CD4-positive, alpha-beta memory T cell (primary cell): ENCODE measurements at regions of chr1 and their contacts with region 1.

Region 1: DNA sequence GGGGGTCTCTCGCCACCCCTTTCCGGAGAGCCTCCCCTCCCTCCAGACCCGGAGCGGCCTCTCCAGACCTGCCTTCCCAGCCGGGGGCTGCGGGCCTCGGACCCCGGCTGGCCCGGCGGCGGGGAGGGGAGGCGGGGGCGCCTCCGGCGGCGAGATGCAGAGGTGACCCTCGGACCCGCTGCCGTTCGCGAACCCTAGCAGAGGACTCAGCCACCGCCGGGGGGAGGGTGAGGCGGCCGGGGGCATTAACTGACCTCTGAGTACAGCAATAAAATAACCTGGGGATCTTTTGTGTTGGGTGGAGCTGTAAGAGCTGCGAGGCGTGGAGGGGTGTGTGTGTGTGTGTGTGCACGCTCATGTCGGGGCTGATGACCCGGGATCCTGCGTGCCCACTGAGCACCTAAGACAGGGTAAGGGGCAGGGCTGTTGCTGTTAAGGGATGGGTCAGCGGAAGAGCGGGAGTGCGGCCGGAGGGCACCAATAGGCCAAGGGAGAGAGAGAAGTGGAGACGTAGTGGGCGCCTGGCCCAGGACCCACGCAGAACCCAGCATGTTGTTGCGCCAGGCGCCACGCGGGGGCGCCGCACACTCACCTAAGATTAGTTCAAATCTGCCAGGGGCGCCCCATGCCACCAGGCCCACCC is 6.3 kb downstream of the HAPLN2 start:
- DNase-seq: peak in 4 of 5 donors; percentile 58 to 68 (median 62)
- H3K4me3 ChIP-seq: peak overlapping the region in 1 of 2 donors; percentile 47
- H3K4me3 Mint-ChIP-seq: peak overlapping the region; percentile 69 to 88 (median 80)
- H3K27ac ChIP-seq: no peak overlapping the region
- H3K27ac Mint-ChIP-seq: peak overlapping the region in 2 of 7 donors; percentile 49 to 93
- H3K4me1 ChIP-seq: peaks cover 20% of the 10 kb centered on the region
- H3K4me1 Mint-ChIP-seq: peaks cover 6 to 16% (median 9%) of the 10 kb centered on the region in 4 donors
- H3K27me3 ChIP-seq: peaks cover 26% of the 10 kb centered on the region
- H3K27me3 Mint-ChIP-seq: peaks cover 31 to 38% of the 10 kb centered on the region in 2 donors

Region 2: GRCh38 chr1:156643778-156644092 is 18.2 kb after region 1 on chr1:
- CTCF ChIA-PET with region 1: interaction called, 23 read pairs
- POLR2A ChIA-PET with region 1: no interaction called
- intact Hi-C with region 1: no loop called
- DNase-seq: peak in 3 of 5 donors; percentile 30 to 58 (median 49)
- H3K4me3 ChIP-seq: no peak overlapping the region
- H3K4me3 Mint-ChIP-seq: peak overlapping the region in 4 of 8 donors; percentile 3 to 42 (median 15)
- H3K27ac ChIP-seq: no peak overlapping the region
- H3K27ac Mint-ChIP-seq: peak overlapping the region in 2 of 7 donors; percentile 15 to 65
- H3K4me1 ChIP-seq: peaks cover 32% of the 10 kb centered on the region
- H3K4me1 Mint-ChIP-seq: peaks cover 12 to 35% (median 22%) of the 10 kb centered on the region in 4 donors
- H3K27me3 ChIP-seq: peaks cover 52% of the 10 kb centered on the region
- H3K27me3 Mint-ChIP-seq: peaks cover 66 to 74% of the 10 kb centered on the region in 2 donors

Region 3: DNA sequence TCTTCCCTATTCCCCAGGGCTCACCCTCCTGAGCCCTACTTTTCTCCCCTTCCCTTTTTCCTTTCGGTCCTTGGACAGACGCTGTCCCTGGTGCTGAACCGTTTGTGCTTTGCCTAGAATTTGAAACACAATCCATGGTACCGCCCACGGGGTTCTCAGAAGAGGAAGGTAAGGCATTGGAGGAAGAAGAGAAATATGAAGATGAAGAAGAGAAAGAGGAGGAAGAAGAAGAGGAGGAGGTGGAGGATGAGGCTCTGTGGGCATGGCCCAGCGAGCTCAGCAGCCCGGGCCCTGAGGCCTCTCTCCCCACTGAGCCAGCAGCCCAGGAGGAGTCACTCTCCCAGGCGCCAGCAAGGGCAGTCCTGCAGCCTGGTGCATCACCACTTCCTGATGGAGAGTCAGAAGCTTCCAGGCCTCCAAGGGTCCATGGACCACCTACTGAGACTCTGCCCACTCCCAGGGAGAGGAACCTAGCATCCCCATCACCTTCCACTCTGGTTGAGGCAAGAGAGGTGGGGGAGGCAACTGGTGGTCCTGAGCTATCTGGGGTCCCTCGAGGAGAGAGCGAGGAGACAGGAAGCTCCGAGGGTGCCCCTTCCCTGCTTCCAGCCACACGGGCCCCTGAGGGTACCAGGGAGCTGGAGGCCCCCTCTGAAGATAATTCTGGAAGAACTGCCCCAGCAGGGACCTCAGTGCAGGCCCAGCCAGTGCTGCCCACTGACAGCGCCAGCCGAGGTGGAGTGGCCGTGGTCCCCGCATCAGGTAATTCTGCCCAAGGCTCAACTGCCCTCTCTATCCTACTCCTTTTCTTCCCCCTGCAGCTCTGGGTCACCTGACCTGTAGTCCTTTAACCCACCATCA is 26.8 kb after region 1 on chr1:
- CTCF ChIA-PET with region 1: interaction called, 153 read pairs
- POLR2A ChIA-PET with region 1: no interaction called
- intact Hi-C with region 1: loop called (anchors 1 kb)
- DNase-seq: no peak
- H3K4me3 ChIP-seq: no peak overlapping the region
- H3K4me3 Mint-ChIP-seq: no peak overlapping the region
- H3K27ac ChIP-seq: no peak overlapping the region
- H3K27ac Mint-ChIP-seq: no peak overlapping the region
- H3K4me1 ChIP-seq: peaks cover 11% of the 10 kb centered on the region
- H3K4me1 Mint-ChIP-seq: peaks cover 4 to 25% (median 12%) of the 10 kb centered on the region in 4 donors
- H3K27me3 ChIP-seq: peaks cover 19% of the 10 kb centered on the region
- H3K27me3 Mint-ChIP-seq: peaks cover 55 to 66% of the 10 kb centered on the region in 2 donors

Region 4: DNA sequence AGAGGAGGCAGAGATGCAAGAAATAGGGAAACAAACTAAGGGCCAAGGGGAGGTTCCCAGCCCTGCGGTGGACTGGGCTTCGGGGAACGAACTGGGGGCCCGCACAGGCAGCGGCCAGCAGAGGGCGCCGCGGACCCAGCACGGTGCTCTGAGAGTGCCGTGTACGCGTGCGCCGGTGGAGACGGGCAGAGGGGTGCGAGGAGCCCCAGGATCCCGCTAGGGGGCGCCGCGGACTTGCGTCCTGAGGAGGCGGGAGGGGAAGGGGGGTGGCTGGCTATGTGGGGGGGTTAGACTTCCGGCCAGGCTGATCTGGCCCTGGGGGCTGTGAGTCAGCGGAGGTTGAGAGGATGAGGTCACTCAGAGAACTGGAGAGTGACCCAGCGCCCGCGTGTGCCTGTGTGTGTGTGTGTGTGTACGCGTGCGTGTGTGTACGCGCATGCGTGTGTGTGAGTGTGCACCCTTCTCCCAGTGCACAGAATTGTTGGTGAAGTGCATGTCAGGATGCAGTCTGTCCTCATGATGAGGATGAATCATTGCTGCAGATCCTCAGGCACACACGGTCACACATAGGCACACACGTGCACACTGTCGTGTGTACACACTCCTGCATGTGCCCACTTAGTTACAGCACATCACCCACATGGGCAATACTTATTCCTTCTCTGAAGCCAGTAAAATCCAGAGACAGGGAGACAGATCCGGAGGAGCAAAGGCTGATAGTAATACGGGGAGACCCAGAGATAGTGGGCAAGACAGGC is 34.6 kb after region 1 on chr1:
- CTCF ChIA-PET with region 1: interaction called, 153 read pairs
- POLR2A ChIA-PET with region 1: interaction called, 4 read pairs
- intact Hi-C with region 1: loop called (anchors 1 kb)
- DNase-seq: peak; percentile 87 to 90 (median 88)
- H3K4me3 ChIP-seq: peak overlapping the region in 1 of 2 donors; percentile 9
- H3K4me3 Mint-ChIP-seq: peak overlapping the region; percentile 45 to 74 (median 60)
- H3K27ac ChIP-seq: no peak overlapping the region
- H3K27ac Mint-ChIP-seq: peak overlapping the region in 6 of 7 donors; percentile 69 to 90 (median 84)
- H3K4me1 ChIP-seq: peaks cover 64% of the 10 kb centered on the region
- H3K4me1 Mint-ChIP-seq: peaks cover 30 to 69% (median 46%) of the 10 kb centered on the region in 4 donors
- H3K27me3 ChIP-seq: peaks cover 10% of the 10 kb centered on the region
- H3K27me3 Mint-ChIP-seq: peaks cover 18 to 22% of the 10 kb centered on the region in 2 donors

Region 5: GRCh38 chr1:156677616-156678596 is 52.3 kb after region 1 on chr1:
- CTCF ChIA-PET with region 1: interaction called, 60 read pairs
- POLR2A ChIA-PET with region 1: interaction called, 3 read pairs
- intact Hi-C with region 1: loop called (anchors 1 kb)
- DNase-seq: peak in 4 of 5 donors; percentile 28 to 37 (median 32)
- H3K4me3 ChIP-seq: no peak overlapping the region
- H3K4me3 Mint-ChIP-seq: peak overlapping the region in 7 of 8 donors; percentile 46 to 74 (median 54)
- H3K27ac ChIP-seq: no peak overlapping the region
- H3K27ac Mint-ChIP-seq: peak overlapping the region in 3 of 7 donors; percentile 21 to 69 (median 60)
- H3K4me1 ChIP-seq: peaks cover 14% of the 10 kb centered on the region
- H3K4me1 Mint-ChIP-seq: peaks cover 1 to 14% (median 12%) of the 10 kb centered on the region in 4 donors
- H3K27me3 ChIP-seq: peaks cover 34% of the 10 kb centered on the region
- H3K27me3 Mint-ChIP-seq: peaks cover 40 to 50% of the 10 kb centered on the region in 2 donors

Region 6: GRCh38 chr1:156705918-156706656 is 80.5 kb after region 1 on chr1:
- CTCF ChIA-PET with region 1: interaction called, 8 read pairs
- POLR2A ChIA-PET with region 1: interaction called, 3 read pairs
- intact Hi-C with region 1: loop called (anchors 10 kb)
- DNase-seq: peak; percentile 67 to 72 (median 70)
- H3K4me3 ChIP-seq: peak overlapping the region; percentile 63 to 65
- H3K4me3 Mint-ChIP-seq: peak overlapping the region; percentile 88 to 96 (median 89)
- H3K27ac ChIP-seq: peak overlapping the region; percentile 63
- H3K27ac Mint-ChIP-seq: peak overlapping the region; percentile 84 to 94 (median 93)
- H3K4me1 ChIP-seq: peaks cover 32% of the 10 kb centered on the region
- H3K4me1 Mint-ChIP-seq: peaks cover 8 to 47% (median 24%) of the 10 kb centered on the region in 4 donors
- H3K27me3 ChIP-seq: peaks cover 6% of the 10 kb centered on the region
- H3K27me3 Mint-ChIP-seq: peaks cover 6 to 9% of the 10 kb centered on the region in 2 donors